H1 (cell line): ENCODE measurements at regions of chr1 and their contacts with region 1.

Region 1: GRCh38 chr1:2429780-2430591 is 17.6 kb upstream of the PEX10 start:
- DNase-seq: no peak
- H3K4me3 ChIP-seq: no peak overlapping the region
- H3K27ac ChIP-seq: no peak overlapping the region
- H3K4me1 ChIP-seq: no peaks in the 10 kb centered on the region
- H3K27me3 ChIP-seq: 0 out of 7 replicates have a peak, but pooled peaks cover 0 to 2% (median 0%) of the 10 kb centered on the region in 4 experiments
- CTCF ChIP-seq: peak in 2 of 3 experiments; percentile 44 to 69; a peak in 3 of 4 replicates
- EP300 ChIP-seq: no peak
- POLR2A ChIP-seq: no peak
- RAD21 ChIP-seq: peak; percentile 46 to 55

Region 2: DNA sequence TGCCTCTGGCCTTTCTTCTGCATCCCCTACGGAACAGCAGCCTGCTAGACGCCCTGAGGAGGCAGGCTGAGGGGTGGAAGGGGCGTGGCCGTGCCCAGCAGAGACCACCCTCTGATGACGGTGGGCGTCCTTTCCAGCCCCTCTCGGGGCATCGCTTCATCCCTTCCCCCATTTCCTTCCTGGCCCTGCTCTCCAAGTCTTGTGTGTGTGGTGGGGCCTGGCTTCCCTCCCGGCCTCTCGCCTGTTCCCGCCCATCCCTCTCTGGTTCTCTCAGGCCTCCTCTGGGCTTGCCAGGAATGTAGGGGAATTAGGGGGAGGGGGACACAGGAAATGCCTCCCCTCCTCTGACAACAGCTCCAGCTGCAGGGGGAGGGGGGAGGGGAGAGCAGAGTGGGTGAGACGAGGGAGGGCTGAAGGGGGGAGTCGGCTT is 150.8 kb before region 1 on chr1:
- CTCF ChIA-PET with region 1: no interaction called
- POLR2A ChIA-PET with region 1: no interaction called
- DNase-seq: peak; percentile 88 to 93
- H3K4me3 ChIP-seq: peak overlapping the region in 1 of 4 experiments; percentile 29; a peak in 1 of 8 replicates
- H3K27ac ChIP-seq: peak overlapping the region; percentile 78; the same call in 1 of the 2 replicates
- H3K4me1 ChIP-seq: peaks cover 5 to 41% (median 30%) of the 10 kb centered on the region in 4 experiments
- H3K27me3 ChIP-seq: no peaks in the 10 kb centered on the region
- CTCF ChIP-seq: no peak
- EP300 ChIP-seq: peak in 1 of 2 experiments; percentile 91; a peak in 1 of 3 replicates
- POLR2A ChIP-seq: peak in 1 of 2 experiments; percentile 46; a peak in 1 of 3 replicates
- RAD21 ChIP-seq: 0 out of 4 replicates have a peak, but pooled peaks of 1 of the 2 experiments have one; percentile 2

Region 3: GRCh38 chr1:2412519-2413233 is 17.3 kb before region 1 on chr1 and contains the start of gene PEX10:
- CTCF ChIA-PET with region 1: interaction called, 48 read pairs
- POLR2A ChIA-PET with region 1: interaction called, 4 read pairs
- DNase-seq: peak; percentile 81 to 99
- H3K4me3 ChIP-seq: peak within 1 kb of the TSS; percentile 60 to 92 (median 88)
- H3K27ac ChIP-seq: peak within 1 kb of the TSS; percentile 63; the same call in 1 of the 2 replicates
- H3K4me1 ChIP-seq: peaks cover 0 to 14% (median 11%) of the 10 kb centered on the region in 4 experiments; a peak in 5 of 7 replicates
- H3K27me3 ChIP-seq: no peaks in the 10 kb centered on the region
- CTCF ChIP-seq: no peak
- EP300 ChIP-seq: no peak
- POLR2A ChIP-seq: no peak; a peak in 2 of 3 replicates
- RAD21 ChIP-seq: no peak
- total RNA-seq, gene PEX10: 24.3 and 24.7 TPM in 2 replicates

Region 4: GRCh38 chr1:2443277-2444137 is 13.5 kb after region 1 on chr1:
- CTCF ChIA-PET with region 1: interaction called, 11 read pairs
- POLR2A ChIA-PET with region 1: no interaction called
- DNase-seq: peak in 1 of 2 experiments; percentile 76
- H3K4me3 ChIP-seq: peak overlapping the region in 2 of 4 experiments; percentile 10 to 51; a peak in 5 of 8 replicates
- H3K27ac ChIP-seq: no peak overlapping the region
- H3K4me1 ChIP-seq: peaks cover 0 to 18% (median 10%) of the 10 kb centered on the region in 4 experiments; a peak in 4 of 7 replicates
- H3K27me3 ChIP-seq: peaks cover 18 to 34% (median 30%) of the 10 kb centered on the region in 4 experiments
- CTCF ChIP-seq: peak in 2 of 3 experiments; percentile 24 to 54; a peak in 3 of 4 replicates
- EP300 ChIP-seq: no peak
- POLR2A ChIP-seq: no peak
- RAD21 ChIP-seq: peak; percentile 51 to 71

Region 5: DNA sequence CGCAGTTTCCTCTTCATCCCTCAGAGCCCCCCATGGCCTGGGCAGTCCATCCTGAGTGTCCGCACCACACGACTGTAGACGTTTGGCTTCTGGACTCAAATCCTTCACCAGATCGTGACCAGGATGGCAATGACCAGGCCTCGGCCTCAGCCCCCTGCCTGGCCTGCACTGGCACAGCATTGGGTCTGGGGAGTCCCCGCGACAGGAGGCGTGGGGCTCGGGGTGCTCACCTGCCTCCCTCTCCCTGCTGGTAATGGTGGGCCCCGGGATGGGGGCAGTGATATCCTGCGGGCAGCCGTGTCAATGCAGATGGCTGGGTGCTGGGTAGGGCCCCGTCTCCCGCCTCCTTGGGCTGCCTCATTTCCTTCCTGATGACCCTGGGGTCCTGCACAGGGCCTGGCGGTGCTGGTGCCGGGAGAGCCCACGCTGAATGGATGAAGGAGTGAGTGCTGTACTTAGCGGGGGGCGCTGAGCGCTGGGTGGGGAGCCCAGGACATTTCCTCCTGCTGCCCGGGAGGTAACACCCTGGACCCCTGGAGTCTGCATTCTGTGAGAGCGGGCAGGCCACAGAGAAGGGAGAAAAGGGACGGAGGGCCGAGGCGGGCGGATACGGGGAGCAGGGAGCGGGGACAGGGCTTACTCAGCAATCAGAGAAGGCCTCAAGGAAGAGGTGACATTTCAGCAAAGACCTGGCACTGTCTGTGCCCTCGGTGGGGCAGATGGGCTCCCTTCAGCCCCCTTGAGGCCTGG is 124.1 kb after region 1 on chr1:
- CTCF ChIA-PET with region 1: no interaction called
- POLR2A ChIA-PET with region 1: no interaction called
- DNase-seq: no peak
- H3K4me3 ChIP-seq: no peak overlapping the region
- H3K27ac ChIP-seq: no peak overlapping the region
- H3K4me1 ChIP-seq: peaks cover 0 to 6% (median 0%) of the 10 kb centered on the region in 4 experiments; a peak in 3 of 7 replicates
- H3K27me3 ChIP-seq: no peaks in the 10 kb centered on the region
- CTCF ChIP-seq: no peak
- EP300 ChIP-seq: no peak
- POLR2A ChIP-seq: no peak
- RAD21 ChIP-seq: no peak